ENCODE measurements at regions of chr15 and their contacts with region 1.

Region 1: GRCh38 chr15:78618490-78618934 is 2.3 kb downstream of the CHRNA3 start:
- DNase-seq: peak; percentile 88
- H3K27ac ChIP-seq: no peak overlapping the region
- CTCF ChIP-seq: peak; percentile 89

Region 2: GRCh38 chr15:78382114-78382880 is 236.2 kb before region 1 on chr15:
- CTCF ChIA-PET with region 1: no interaction called
- POLR2A ChIA-PET with region 1: no interaction called
- DNase-seq: no peak
- H3K27ac ChIP-seq: no peak overlapping the region
- CTCF ChIP-seq: no peak

Region 3: DNA sequence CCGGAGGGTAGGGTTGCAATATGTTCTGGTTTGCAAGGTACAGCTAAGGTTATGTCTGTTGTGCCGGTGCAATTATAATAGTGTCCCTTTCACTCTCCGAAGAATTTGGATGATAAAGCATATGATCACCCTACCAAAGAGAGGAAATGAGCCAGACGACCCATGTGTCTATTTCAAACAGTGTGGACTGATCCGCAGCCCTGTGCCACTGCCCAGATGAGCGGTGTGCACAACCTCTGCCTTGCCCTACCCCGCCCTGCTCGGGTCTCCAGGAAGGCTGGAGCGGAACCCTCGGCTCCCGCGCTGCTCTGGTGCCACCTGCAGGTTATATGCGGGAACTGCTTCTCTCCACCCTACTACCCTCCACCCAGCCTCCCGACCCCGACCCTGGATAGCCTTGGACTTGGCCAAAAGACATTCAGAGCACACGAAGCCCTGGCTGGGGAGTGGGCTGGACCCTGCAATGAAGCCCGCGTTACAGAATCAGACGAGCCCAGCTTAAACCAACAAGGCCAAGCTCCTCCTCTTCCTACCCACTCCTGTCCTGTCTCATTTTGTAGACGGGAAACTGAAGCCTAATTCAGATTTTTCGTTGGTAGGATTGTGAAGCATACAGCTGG is 90.9 kb after region 1 on chr15:
- CTCF ChIA-PET with region 1: interaction called, 19 read pairs
- POLR2A ChIA-PET with region 1: no interaction called
- DNase-seq: peak; percentile 78
- H3K27ac ChIP-seq: no peak overlapping the region
- CTCF ChIP-seq: peak; percentile 97

Measured in RWPE1 (cell line).